Mammary epithelial cell (primary cell): ENCODE measurements at regions of chr2 and their contacts with region 1.

Region 1: GRCh38 chr2:141994066-141994465 is 136.8 kb downstream of the LRP1B start:
- DNase-seq: peak; percentile 23
- H3K4me3 ChIP-seq: no peak overlapping the region
- H3K27ac ChIP-seq: no peak overlapping the region
- H3K4me1 ChIP-seq: no peaks in the 10 kb centered on the region
- H3K27me3 ChIP-seq: no peaks in the 10 kb centered on the region
- CTCF ChIP-seq: no peak

Region 2: GRCh38 chr2:141923657-141924056 is 70.4 kb before region 1 on chr2:
- CTCF ChIA-PET with region 1: no interaction called
- dilution Hi-C with region 1: no loop called
- in situ Hi-C with region 1: no loop called
- intact Hi-C with region 1: loop called (anchors 2 kb)
- DNase-seq: peak; percentile 78
- H3K4me3 ChIP-seq: no peak overlapping the region
- H3K27ac ChIP-seq: peak overlapping the region; percentile 57
- H3K4me1 ChIP-seq: peaks cover 15% of the 10 kb centered on the region
- H3K27me3 ChIP-seq: no peaks in the 10 kb centered on the region
- CTCF ChIP-seq: no peak

Region 3: GRCh38 chr2:142037744-142038143 is 43.7 kb after region 1 on chr2:
- CTCF ChIA-PET with region 1: no interaction called
- dilution Hi-C with region 1: no loop called
- in situ Hi-C with region 1: no loop called
- intact Hi-C with region 1: no loop called
- DNase-seq: peak; percentile 51
- H3K4me3 ChIP-seq: no peak overlapping the region
- H3K27ac ChIP-seq: no peak overlapping the region
- H3K4me1 ChIP-seq: peaks cover 43% of the 10 kb centered on the region
- H3K27me3 ChIP-seq: no peaks in the 10 kb centered on the region
- CTCF ChIP-seq: peak in 1 of 2 donors; percentile 32

Region 4: DNA sequence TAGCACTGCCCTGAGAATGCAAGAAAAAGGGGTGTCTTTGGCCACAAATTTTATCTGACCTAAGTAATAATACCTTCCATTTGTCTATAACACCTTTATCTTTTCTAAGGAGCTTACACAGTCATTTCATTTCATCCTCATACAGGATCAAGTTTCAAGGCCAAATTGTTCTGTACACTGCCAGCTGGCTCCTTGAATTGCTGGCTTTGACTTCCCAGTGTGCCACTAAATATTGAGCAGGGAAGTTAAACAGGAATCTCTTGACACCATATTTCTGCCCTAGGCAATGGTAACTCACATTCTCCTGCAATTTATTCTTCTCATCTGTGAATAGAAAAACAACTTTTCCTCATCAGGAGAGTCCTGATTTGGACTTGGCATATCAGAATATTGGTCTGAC is 331.8 kb after region 1 on chr2:
- CTCF ChIA-PET with region 1: no interaction called
- dilution Hi-C with region 1: no loop called
- in situ Hi-C with region 1: loop called in 1 of 2 experiments (anchors 25 kb)
- intact Hi-C with region 1: no loop called
- DNase-seq: no peak
- H3K4me3 ChIP-seq: no peak overlapping the region
- H3K27ac ChIP-seq: no peak overlapping the region
- H3K4me1 ChIP-seq: peaks cover 4% of the 10 kb centered on the region
- H3K27me3 ChIP-seq: no peaks in the 10 kb centered on the region
- CTCF ChIP-seq: no peak